ENCODE measurements at regions of chr4 and their contacts with region 1.

Region 1: DNA sequence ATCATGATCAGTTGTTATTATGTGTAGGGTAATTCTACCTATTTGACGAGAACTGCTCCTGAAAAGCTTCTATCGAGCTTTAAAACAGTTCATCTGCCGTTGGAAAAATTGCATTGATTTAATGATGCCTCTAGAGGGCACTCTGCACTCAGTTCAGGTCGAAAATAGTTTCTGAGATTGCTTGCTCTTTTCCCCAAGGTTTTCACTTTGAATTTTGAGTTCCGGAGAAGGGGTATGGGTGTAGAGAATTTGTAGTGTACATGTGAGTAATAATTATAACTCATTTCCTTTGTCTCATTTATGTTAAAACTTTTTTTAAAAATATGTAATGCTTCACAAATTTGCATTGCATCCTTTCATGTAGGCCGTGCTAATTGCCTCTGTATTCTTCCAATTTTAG is 28.4 kb upstream of the TNIP3 start:
- H3K4me3 Mint-ChIP-seq: no peak overlapping the region
- H3K27ac Mint-ChIP-seq: no peak overlapping the region
- H3K4me1 Mint-ChIP-seq: no peaks in the 10 kb centered on the region
- H3K27me3 Mint-ChIP-seq: peaks cover 10% of the 10 kb centered on the region

Region 2: DNA sequence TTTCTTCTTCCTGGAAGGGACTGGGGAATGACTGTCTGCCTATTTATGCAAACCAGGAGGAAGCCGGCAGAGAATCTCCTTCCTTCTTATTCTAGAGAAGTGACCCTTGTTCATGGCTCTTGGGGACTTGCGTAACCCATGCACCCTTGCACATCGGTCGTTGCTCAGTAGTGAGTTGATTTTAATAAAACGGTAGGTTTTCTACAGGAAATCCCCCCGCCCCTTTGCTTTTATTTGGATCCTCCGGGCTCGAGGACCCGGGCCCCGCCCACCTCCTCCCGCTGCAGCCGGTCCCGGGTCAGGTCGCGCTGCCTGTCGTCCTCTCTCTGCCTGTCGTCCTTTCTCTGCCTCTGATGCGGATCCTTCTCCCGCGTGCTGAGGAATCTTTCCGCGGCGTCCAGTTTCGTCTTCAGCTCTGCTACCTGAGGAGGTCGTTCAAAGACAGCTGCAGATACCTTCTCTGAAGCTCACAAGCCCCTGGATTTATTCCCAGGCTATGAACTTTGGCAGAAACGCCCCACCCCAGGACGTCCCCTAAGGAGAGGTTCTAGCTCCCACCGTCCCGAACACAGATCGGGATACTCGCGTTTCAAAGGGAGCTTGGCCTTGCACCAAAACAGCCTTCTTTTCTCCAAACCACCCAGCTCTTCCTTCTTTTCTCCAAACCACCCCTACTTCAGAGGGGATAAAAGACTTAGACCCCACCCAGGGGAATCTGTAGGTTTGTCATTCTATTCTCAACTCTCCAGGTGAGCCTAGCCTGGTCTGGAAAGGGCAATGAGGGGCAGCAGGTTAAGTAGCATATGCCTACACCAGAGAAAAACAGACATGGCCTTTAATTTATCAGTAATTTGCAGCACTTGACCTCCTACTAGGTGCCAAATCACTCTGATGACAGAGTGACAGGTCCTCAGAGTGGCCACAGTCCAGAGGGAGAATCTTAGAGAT is 35.4 kb before region 1 on chr4:
- intact Hi-C with region 1: loop called (anchors 5 kb)
- H3K4me3 Mint-ChIP-seq: peak overlapping the region; percentile 78
- H3K27ac Mint-ChIP-seq: peak overlapping the region; percentile 76
- H3K4me1 Mint-ChIP-seq: peaks cover 42% of the 10 kb centered on the region
- H3K27me3 Mint-ChIP-seq: peaks cover 1% of the 10 kb centered on the region

Region 3: DNA sequence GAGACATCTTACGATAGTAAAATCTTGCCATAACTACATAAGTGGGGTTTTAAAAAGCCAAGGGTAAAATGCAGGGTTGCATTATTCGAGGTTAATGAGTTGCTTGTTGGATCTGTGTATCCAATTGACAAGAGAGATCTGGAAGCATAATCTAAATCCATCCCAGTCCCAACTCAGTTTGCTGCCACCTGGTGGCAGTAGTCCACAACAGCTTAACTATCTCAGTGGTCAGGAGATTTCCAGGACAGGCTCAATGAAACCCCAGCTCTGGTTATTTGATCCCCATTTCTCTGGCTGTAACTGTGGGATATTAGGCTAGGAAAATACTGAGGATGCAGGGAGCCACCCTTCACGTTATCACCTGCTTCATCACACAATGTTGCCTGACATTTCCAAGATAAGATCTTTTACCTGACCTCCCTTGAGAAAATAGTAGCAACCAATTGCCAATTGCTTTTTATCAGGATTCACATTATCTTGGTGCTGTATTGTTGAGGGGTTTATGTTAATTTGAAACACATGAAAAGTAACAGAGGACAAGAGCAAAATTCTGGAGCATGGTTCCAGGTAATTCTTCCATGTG is 59.8 kb after region 1 on chr4:
- intact Hi-C with region 1: loop called (anchors 1 kb)
- H3K4me3 Mint-ChIP-seq: no peak overlapping the region
- H3K27ac Mint-ChIP-seq: no peak overlapping the region
- H3K4me1 Mint-ChIP-seq: peaks cover 14% of the 10 kb centered on the region
- H3K27me3 Mint-ChIP-seq: peaks cover 5% of the 10 kb centered on the region

Region 4: DNA sequence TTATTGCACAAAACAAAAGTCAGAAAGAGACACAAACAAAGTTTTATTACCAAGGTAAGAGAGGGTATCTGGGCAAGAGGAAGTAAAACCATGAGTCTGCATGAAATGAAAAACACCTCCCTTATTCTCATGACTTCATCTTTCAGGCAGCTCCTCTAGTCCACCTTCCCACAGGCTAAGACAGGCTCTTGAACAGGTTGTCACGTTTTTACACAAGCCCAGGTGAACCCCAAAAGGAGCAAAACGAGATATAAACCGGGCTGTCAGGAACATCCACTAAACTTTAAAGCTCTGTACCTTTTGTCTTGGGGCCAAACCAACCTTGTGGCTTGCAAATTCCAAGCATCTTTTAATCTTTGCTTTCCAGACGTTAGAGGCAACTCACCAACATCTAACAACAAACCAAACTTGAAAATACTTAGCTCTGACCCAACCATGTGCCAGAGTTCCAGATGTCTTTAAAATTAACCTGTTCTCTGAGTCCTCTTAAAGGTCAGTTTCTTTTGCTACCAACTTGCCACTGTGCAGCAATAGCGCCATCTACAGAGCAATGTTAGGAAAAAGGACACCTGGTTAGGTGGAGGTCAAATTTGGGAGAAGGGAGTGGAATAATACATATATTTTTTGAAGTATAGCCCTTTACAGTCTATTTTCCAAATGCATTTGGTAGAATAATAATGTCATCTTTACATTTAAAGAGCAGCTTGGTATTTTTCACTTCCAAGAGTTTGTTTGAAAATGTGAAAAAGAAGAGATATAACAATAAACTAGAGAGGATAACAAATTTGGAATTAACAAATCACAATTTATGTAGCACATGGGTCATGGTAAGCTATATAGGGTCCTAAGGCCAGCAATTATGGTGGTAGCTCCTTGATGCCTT is 115.2 kb after region 1 on chr4:
- intact Hi-C with region 1: loop called (anchors 2 kb)
- H3K4me3 Mint-ChIP-seq: no peak overlapping the region
- H3K27ac Mint-ChIP-seq: no peak overlapping the region
- H3K4me1 Mint-ChIP-seq: no peaks in the 10 kb centered on the region
- H3K27me3 Mint-ChIP-seq: no peaks in the 10 kb centered on the region

Measured in dendritic cell treated with granulocyte-macrophage colony-stimulating factor and Interleukin-4, amounts not matched to agents 40 ng/mL and 50 ng/mL, for 4 days (primary cell).